AG04449 (cell line): ENCODE measurements at regions of chr3 and their contacts with region 1.

Region 1: DNA sequence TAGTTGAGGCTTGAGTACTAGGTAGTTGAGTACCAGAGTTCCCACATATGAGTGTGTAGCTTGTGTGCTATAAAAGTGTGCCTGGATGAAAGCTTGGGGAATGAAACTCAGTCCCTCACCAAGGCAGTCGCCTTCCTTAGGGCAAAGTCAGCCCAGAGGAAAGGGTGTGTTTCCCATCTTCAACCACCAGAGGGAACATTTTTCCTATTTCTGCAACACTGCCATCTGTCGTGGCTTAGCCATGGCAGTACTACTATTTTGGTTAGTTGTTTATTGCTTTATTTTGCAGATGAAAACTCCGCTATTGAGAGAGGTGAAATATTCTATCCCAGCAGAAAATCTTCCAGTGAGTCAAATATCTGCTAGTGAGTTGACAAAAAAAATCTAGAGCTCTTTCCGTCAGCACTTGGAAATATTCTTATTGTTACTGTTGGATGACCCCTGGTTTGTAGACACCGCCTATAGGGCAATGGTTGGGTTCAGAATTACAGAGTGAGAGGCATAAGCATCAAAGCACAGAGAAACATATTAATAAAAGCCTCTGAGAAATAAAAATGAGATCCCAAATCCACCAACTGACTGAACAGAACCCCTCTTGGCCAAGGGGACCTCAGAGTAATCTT is 239.9 kb downstream of the CPNE4 start:
- DNase-seq: peak; percentile 21
- H3K4me3 ChIP-seq: no peak overlapping the region
- CTCF ChIP-seq: peak; percentile 80

Region 2: DNA sequence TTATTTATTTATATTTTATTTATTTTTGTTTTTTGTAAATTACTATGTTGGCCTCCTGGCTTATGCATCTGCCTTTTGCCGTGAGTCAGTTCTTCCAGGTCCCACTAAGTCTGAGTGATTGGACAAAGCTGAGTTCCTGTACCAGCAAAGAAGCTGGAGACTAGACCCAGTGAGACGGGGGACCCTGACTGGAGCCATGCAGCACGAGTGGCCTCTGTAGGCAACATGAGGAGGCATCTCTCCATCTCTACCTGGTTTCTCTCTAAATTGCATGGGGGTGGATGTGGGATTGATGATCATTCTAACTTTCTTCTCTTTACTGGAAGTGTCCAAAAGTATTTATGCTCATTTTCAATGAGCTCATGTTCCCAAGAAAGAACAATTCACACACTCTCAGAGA is 136.8 kb before region 1 on chr3:
- CTCF ChIA-PET with region 1: no interaction called
- POLR2A ChIA-PET with region 1: no interaction called
- DNase-seq: no peak
- H3K4me3 ChIP-seq: no peak overlapping the region
- CTCF ChIP-seq: no peak

Region 3: DNA sequence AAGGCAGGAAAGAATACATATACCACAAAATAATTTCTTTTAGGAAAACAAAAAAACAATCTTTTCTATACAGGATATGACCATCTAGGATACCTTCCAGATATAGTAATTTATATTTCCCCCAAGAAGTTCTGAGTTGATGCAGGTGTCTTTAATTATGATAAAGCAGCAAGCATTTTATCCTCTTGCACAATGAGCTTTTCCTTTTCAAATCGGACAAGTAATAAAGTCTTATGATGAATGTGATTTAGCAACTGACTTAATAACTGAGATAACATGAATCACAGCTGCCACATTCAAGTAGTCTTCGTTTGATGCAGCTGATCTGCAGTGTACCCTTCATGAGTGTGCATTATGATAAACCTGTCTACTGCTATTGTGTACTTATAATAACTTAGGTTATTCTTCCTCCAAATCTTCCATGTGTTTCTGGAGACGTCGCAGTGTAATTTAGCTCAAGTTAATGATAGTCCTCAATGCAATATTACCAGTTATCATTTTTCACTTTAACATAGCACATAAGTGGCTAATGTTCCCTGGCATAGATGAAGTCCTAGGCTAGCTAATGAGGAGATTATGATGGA is 31.8 kb before region 1 on chr3:
- CTCF ChIA-PET with region 1: interaction called, 25 read pairs
- POLR2A ChIA-PET with region 1: no interaction called
- DNase-seq: no peak
- H3K4me3 ChIP-seq: no peak overlapping the region
- CTCF ChIP-seq: no peak

Region 4: GRCh38 chr3:131812421-131812820 is 17.5 kb after region 1 on chr3:
- CTCF ChIA-PET with region 1: interaction called, 26 read pairs
- POLR2A ChIA-PET with region 1: no interaction called
- DNase-seq: no peak
- H3K4me3 ChIP-seq: no peak overlapping the region
- CTCF ChIP-seq: no peak

Region 5: GRCh38 chr3:132016061-132017041 is 221.5 kb after region 1 on chr3:
- CTCF ChIA-PET with region 1: interaction called, 49 read pairs
- POLR2A ChIA-PET with region 1: no interaction called
- DNase-seq: no peak
- H3K4me3 ChIP-seq: no peak overlapping the region
- CTCF ChIP-seq: no peak